GM12878 (cell line): ENCODE measurements at regions of chr2 and their contacts with region 1.

Region 1: GRCh38 chr2:197986977-197987376 is 182.6 kb downstream of the PLCL1 start:
- DNase-seq: no peak
- ATAC-seq: no peak
- H3K4me3 ChIP-seq: no peak overlapping the region
- H3K27ac ChIP-seq: no peak overlapping the region
- H3K4me1 ChIP-seq: peaks cover 5% of the 10 kb centered on the region
- H3K27me3 ChIP-seq: no peaks in the 10 kb centered on the region
- CTCF ChIP-seq: no peak
- EP300 ChIP-seq: no peak
- POLR2A ChIP-seq: no peak
- RAD21 ChIP-seq: no peak

Region 2: DNA sequence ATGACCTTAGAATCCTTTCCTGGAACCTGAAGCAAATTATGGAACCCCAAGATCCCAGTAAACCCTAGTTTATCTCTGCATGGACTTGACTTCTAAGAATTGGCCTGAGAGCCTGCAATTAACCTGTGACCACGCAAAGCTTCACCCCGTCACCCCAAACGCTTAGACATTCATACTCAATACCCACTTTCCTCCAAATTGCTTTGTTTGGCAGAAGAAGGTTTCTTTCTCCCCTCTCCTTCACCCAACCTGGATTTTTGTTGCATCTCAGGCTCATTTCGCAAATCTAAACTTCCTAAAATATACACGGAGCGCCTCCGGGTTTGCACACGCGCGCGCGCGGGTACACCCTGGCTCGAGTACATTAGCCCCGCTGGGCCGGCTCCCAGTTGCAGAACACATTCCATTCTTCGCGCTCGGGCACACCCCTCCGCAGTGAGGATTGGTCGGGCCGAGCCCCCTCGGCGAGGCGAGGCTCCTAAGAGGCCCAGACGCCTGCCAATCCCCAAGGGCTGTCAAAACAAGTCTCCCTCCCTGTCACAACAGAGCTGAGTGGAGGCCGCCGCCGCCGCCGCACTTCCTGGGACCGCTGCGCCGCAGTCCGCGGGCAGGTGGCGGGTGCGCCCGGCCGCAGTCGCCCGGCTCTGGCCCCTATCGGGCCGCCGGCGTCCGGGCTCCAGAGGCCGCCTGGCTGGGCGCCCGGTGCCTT is 182.8 kb before region 1 on chr2 and contains the start of gene PLCL1:
- CTCF ChIA-PET with region 1: interaction called, 8 read pairs
- POLR2A ChIA-PET with region 1: interaction called, 3 read pairs
- RAD21 ChIA-PET with region 1: interaction called, 5 read pairs
- SMC1A ChIA-PET with region 1: interaction called, 11 read pairs
- in situ Hi-C with region 1: no loop called
- intact Hi-C with region 1: loop called (anchors 5 kb)
- DNase-seq: peak; percentile 40
- ATAC-seq: peak; percentile 99
- H3K4me3 ChIP-seq: peak within 1 kb of the TSS; percentile 62
- H3K27ac ChIP-seq: no peak within 1 kb of the TSS
- H3K4me1 ChIP-seq: no peaks in the 10 kb centered on the region
- H3K27me3 ChIP-seq: peaks cover 4 to 19% of the 10 kb centered on the region in 2 experiments
- CTCF ChIP-seq: 0 out of 6 replicates have a peak, but pooled peaks of 1 of the 3 experiments have one; percentile 2
- EP300 ChIP-seq: no peak
- POLR2A ChIP-seq: no peak
- RAD21 ChIP-seq: no peak
- polyA plus RNA-seq, gene PLCL1: 0.03 to 0.05 TPM

Region 3: DNA sequence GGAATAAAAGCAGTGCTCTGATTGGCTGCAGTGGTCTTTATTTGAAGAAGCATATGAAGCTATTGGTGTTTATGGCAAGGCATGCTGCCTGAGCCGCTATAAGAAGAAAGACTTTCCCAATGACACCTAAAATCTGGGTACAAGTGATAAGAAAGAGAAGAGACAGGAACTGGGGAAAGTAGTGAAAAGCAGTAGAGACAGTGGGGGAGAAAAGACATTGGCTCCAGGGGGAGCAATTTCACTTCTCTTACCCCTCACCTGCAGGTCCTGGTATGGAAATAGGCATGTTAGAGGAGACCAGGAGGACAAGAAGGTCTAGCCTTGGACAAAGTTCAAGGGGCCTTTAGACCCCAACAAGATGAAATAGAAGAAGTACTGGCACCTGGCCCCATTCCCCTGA is 135.5 kb before region 1 on chr2:
- CTCF ChIA-PET with region 1: interaction called, 15 read pairs
- POLR2A ChIA-PET with region 1: no interaction called
- RAD21 ChIA-PET with region 1: interaction called, 25 read pairs
- SMC1A ChIA-PET with region 1: interaction called, 21 read pairs
- in situ Hi-C with region 1: no loop called
- intact Hi-C with region 1: no loop called
- DNase-seq: no peak
- ATAC-seq: peak; percentile 77
- H3K4me3 ChIP-seq: no peak overlapping the region
- H3K27ac ChIP-seq: no peak overlapping the region
- H3K4me1 ChIP-seq: no peaks in the 10 kb centered on the region
- H3K27me3 ChIP-seq: no peaks in the 10 kb centered on the region
- CTCF ChIP-seq: peak; percentile 28 to 57 (median 33); a peak in 4 of 6 replicates
- EP300 ChIP-seq: no peak
- POLR2A ChIP-seq: no peak
- RAD21 ChIP-seq: peak; percentile 72

Region 4: DNA sequence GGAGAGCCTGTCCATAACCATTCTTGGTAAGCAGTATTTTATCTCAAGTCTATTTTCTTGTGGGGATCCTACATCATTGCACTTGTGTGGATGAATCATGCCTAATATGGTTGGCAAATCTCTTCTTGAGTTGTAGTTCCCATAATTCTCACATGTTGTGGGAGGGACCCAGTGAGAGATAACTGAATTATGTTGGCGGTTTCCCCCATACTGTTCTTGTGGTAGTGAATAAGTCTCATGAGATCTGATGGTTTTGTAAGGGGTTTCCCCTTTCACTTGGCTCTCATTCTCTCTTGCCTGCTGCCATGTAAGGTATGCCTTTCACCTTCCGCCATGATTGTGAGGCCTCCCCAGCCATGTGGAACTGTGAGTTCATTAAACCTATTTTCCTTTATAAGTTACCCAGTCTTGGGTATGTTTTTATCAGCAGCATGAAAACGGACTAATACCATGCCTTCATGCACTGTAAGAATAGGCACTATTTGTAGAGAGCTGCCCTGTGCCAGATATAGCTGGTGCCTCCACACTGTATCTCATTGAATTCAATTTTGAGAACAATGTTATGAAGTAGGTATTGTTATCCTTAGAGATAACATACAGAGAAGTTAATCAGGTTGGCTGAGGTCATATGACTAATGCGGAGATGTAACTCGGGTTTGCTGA is 34.3 kb before region 1 on chr2:
- CTCF ChIA-PET with region 1: no interaction called
- POLR2A ChIA-PET with region 1: interaction called, 6 read pairs
- RAD21 ChIA-PET with region 1: interaction called, 25 read pairs
- SMC1A ChIA-PET with region 1: interaction called, 12 read pairs
- in situ Hi-C with region 1: no loop called
- intact Hi-C with region 1: no loop called
- DNase-seq: peak; percentile 24
- ATAC-seq: peak; percentile 90
- H3K4me3 ChIP-seq: no peak overlapping the region
- H3K27ac ChIP-seq: no peak overlapping the region
- H3K4me1 ChIP-seq: no peaks in the 10 kb centered on the region
- H3K27me3 ChIP-seq: no peaks in the 10 kb centered on the region
- CTCF ChIP-seq: no peak
- EP300 ChIP-seq: peak in 1 of 2 experiments; percentile 20; a peak in 1 of 4 replicates
- POLR2A ChIP-seq: no peak
- RAD21 ChIP-seq: no peak

Region 5: GRCh38 chr2:197965756-197966155 is 21.2 kb before region 1 on chr2:
- CTCF ChIA-PET with region 1: interaction called, 4 read pairs
- POLR2A ChIA-PET with region 1: no interaction called
- RAD21 ChIA-PET with region 1: interaction called, 25 read pairs
- SMC1A ChIA-PET with region 1: interaction called, 15 read pairs
- in situ Hi-C with region 1: no loop called
- intact Hi-C with region 1: no loop called
- DNase-seq: no peak
- ATAC-seq: no peak
- H3K4me3 ChIP-seq: no peak overlapping the region
- H3K27ac ChIP-seq: no peak overlapping the region
- H3K4me1 ChIP-seq: no peaks in the 10 kb centered on the region
- H3K27me3 ChIP-seq: no peaks in the 10 kb centered on the region
- CTCF ChIP-seq: no peak
- EP300 ChIP-seq: no peak
- POLR2A ChIP-seq: no peak
- RAD21 ChIP-seq: no peak

Region 6: DNA sequence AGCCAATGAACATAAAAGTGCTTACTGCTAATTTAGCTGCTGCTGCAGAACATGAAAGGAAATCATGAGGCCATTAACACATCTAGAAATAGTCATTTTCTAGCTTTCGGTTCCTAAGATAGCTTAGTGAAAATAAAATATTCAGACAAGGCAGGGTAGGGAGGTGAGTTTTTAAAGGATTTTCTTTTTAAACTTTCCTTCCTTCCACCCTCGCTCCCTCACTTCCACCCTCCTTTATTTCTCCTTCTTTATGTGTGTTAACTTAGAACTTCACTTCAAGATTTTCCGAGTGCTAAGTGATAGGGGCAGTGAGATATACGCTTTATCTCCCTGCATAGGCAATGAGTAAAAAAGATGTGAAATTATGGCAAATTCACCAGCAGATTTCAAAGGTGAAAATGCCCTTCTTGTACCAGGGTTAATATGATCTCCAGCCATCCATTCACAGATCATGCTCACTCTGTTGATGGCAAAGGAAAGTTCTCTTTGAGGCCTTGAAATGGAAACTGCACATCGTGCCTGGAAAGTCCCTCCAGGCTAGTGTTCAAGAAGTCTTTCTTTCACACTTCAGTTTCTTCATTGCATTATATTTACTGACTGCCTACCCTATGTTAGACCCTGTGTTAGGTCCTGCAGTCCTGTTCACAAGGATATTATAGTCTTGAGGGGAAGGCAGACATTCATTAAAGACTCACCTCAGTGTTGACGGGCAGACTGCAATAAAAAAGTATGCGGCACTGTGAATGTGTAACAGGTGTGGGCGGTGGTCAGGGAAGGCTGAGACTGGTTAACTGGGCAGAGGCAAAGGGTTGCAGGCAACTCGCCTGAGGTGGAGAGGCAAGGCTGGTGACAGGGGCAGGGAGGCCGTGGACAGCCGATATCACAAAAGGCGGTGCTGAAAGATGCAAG is 18.2 kb after region 1 on chr2:
- CTCF ChIA-PET with region 1: interaction called, 5 read pairs
- POLR2A ChIA-PET with region 1: interaction called, 3 read pairs
- RAD21 ChIA-PET with region 1: interaction called, 30 read pairs
- SMC1A ChIA-PET with region 1: interaction called, 168 read pairs
- in situ Hi-C with region 1: no loop called
- intact Hi-C with region 1: loop called (anchors 1 kb)
- DNase-seq: peak; percentile 87
- ATAC-seq: peak; percentile 86
- H3K4me3 ChIP-seq: peak overlapping the region; percentile 20; the same call in 1 of the 2 replicates
- H3K27ac ChIP-seq: peak overlapping the region; percentile 99
- H3K4me1 ChIP-seq: peaks cover 39% of the 10 kb centered on the region
- H3K27me3 ChIP-seq: no peaks in the 10 kb centered on the region
- CTCF ChIP-seq: no peak
- EP300 ChIP-seq: peak; percentile 72 to 89
- POLR2A ChIP-seq: no peak
- RAD21 ChIP-seq: peak; percentile 13; the same call in 1 of the 2 replicates

Region 7: GRCh38 chr2:198053776-198054698 is 67.1 kb after region 1 on chr2:
- CTCF ChIA-PET with region 1: interaction called, 6 read pairs
- POLR2A ChIA-PET with region 1: no interaction called
- RAD21 ChIA-PET with region 1: interaction called, 5 read pairs
- SMC1A ChIA-PET with region 1: interaction called, 15 read pairs
- in situ Hi-C with region 1: no loop called
- intact Hi-C with region 1: no loop called
- DNase-seq: no peak
- ATAC-seq: peak; percentile 97
- H3K4me3 ChIP-seq: no peak overlapping the region
- H3K27ac ChIP-seq: no peak overlapping the region
- H3K4me1 ChIP-seq: no peaks in the 10 kb centered on the region
- H3K27me3 ChIP-seq: no peaks in the 10 kb centered on the region
- CTCF ChIP-seq: peak; percentile 47 to 65 (median 59)
- EP300 ChIP-seq: no peak
- POLR2A ChIP-seq: no peak
- RAD21 ChIP-seq: peak; percentile 80